AG04449 (cell line): ENCODE measurements at regions of chr17 and their contacts with region 1.

Region 1: DNA sequence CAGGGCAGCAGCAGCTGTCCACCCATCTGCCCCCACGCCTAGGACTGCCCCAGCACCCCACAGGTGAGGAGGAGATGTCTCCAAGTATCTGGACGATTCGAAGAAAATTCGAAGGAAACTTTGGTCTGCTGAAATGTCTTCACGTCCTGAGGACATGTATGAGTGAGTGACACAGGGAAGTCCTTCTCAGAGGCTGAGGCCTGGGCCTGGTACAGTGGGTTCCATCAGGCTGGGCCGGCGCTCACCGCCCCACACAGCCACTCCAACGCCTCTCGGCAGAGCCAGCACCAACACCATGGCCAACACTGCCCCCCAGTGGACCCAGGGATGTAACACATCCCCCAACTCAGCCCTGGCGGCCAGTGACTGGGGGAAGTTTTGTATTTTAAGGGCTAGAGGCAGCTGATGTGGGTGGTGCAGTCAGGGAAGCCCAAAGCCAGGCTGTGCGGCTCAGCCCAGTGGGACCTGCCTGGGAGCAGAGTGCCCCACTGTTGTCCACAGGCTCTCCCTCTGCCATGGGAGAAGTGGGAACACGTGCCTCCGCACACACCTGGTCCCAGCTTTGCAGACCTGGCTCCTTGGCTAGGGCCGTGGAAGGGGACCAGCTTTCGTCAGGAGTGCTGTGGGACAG is 55.8 kb upstream of the FASN start:
- DNase-seq: no peak
- H3K4me3 ChIP-seq: no peak overlapping the region
- CTCF ChIP-seq: peak; percentile 89

Region 2: GRCh38 chr17:82043507-82043906 is 110.4 kb before region 1 on chr17:
- CTCF ChIA-PET with region 1: no interaction called
- POLR2A ChIA-PET with region 1: no interaction called
- DNase-seq: no peak
- H3K4me3 ChIP-seq: no peak overlapping the region
- CTCF ChIP-seq: no peak

Region 3: DNA sequence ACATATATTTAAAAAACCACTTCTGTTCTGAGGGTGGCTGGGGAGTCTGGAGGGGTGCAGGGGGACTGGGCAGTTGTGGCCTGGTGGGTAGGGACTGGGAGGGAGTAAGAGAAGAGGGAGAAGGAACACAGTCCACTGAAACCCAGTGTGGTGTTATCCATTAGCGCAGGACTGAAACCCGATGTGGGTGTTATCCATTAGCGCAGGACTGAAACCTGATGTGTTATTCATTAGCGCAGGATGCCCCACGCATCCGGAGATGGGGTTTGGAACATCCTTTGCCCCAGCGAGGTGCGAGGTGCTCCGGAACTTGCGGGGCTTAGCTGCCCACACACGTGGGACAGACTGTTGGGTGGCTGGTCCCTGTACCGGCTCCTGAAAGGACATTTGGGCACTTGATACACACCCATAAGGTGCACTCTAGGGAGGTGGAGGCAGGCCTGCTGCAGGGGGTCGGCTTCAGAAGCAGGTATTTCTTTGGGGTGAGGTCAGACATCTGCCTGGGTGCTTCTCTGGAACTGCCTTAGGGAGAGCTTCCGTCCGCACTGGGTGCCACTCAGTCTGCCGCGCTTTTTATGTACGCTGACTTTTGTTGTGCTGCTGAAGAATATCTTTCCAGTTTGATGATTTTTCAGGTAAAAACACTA is 35.6 kb before region 1 on chr17:
- CTCF ChIA-PET with region 1: no interaction called
- POLR2A ChIA-PET with region 1: no interaction called
- DNase-seq: no peak
- H3K4me3 ChIP-seq: no peak overlapping the region
- CTCF ChIP-seq: no peak

Region 4: GRCh38 chr17:82134101-82134500 is 19.8 kb before region 1 on chr17:
- CTCF ChIA-PET with region 1: interaction called, 10 read pairs
- POLR2A ChIA-PET with region 1: no interaction called
- DNase-seq: no peak
- H3K4me3 ChIP-seq: no peak overlapping the region
- CTCF ChIP-seq: no peak

Region 5: GRCh38 chr17:82164853-82165252 is 11.0 kb after region 1 on chr17:
- CTCF ChIA-PET with region 1: interaction called, 21 read pairs
- POLR2A ChIA-PET with region 1: no interaction called
- DNase-seq: no peak
- H3K4me3 ChIP-seq: no peak overlapping the region
- CTCF ChIP-seq: no peak

Region 6: DNA sequence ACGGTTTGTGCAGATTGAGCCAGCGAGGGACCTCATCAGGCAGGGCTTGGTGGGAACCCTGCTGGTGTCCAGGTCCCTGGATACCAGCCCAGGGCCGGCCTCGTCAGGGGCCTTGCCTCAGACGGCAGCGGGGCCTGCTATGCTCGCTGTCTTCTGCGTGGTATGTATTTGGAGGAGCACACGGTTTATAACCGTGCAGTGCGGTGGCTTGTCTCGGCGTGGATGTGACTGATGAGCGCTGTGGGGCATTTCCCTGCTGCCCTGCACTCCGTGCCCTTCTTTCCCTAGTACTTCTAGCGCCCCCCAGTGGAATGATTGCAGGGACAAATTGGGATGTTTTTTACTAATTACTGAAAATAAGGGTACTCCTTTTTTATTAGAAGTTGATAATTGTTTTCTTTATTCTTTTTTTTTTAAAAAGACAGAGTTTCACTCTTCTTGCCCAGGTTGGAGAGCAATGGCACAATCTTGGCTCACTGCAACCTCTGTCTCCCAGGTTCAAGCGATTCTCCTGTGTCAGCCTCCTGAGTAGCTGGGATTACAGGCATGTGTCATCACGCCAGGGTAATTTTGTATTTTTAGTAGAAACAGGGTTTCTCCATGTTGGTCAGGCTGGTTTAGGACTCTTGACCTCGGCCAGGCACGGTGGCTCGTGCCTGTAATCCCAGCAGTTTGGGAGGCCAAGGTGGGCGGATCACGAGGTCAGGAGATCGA is 613.3 kb after region 1 on chr17:
- CTCF ChIA-PET with region 1: no interaction called
- POLR2A ChIA-PET with region 1: no interaction called
- DNase-seq: no peak
- H3K4me3 ChIP-seq: no peak overlapping the region
- CTCF ChIP-seq: peak; percentile 44